ENCODE measurements at regions of chr17 and their contacts with region 1.

Region 1: GRCh38 chr17:32909787-32910369 is 18.1 kb upstream of the TMEM98 start:
- DNase-seq: peak; percentile 88
- H3K4me3 ChIP-seq: no peak overlapping the region
- H3K27ac ChIP-seq: no peak overlapping the region
- H3K4me1 ChIP-seq: peaks cover 9% of the 10 kb centered on the region
- H3K27me3 ChIP-seq: peaks cover 0 to under 1% of the 10 kb centered on the region in 2 experiments
- CTCF ChIP-seq: peak; percentile 72 to 81
- POLR2A ChIP-seq: no peak

Region 2: DNA sequence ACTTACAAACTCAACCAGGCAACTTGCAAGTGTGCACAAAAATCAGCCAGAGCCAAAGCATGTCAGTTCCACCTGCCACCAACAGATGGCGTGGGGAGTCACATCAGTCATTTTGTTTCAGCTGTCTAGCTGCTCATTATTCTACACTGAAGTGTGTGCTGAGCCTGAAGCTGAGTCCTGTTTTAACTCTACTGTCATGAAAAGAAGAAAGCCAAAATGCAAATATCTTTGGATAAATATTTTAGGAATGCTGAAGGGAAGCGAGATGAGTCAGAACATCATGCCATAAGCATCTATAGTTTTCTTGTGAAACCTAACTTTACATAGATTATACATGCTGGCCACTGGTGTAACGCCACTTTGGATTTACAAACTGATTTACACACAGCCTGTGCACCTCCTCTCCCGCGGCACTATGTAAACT is 250.4 kb before region 1 on chr17:
- CTCF ChIA-PET with region 1: interaction called, 13 read pairs
- POLR2A ChIA-PET with region 1: no interaction called
- dilution Hi-C with region 1: no loop called
- intact Hi-C with region 1: loop called (anchors 1 kb)
- DNase-seq: peak; percentile 84
- H3K4me3 ChIP-seq: no peak overlapping the region
- H3K27ac ChIP-seq: no peak overlapping the region
- H3K4me1 ChIP-seq: no peaks in the 10 kb centered on the region
- H3K27me3 ChIP-seq: no peaks in the 10 kb centered on the region
- CTCF ChIP-seq: peak; percentile 85 to 92
- POLR2A ChIP-seq: no peak

Region 3: GRCh38 chr17:32746698-32747097 is 163.2 kb before region 1 on chr17:
- CTCF ChIA-PET with region 1: no interaction called
- POLR2A ChIA-PET with region 1: no interaction called
- dilution Hi-C with region 1: no loop called
- intact Hi-C with region 1: no loop called
- DNase-seq: no peak
- H3K4me3 ChIP-seq: no peak overlapping the region
- H3K27ac ChIP-seq: peak overlapping the region; percentile 12
- H3K4me1 ChIP-seq: peaks cover 30% of the 10 kb centered on the region
- H3K27me3 ChIP-seq: no peaks in the 10 kb centered on the region
- CTCF ChIP-seq: no peak
- POLR2A ChIP-seq: no peak

Region 4: DNA sequence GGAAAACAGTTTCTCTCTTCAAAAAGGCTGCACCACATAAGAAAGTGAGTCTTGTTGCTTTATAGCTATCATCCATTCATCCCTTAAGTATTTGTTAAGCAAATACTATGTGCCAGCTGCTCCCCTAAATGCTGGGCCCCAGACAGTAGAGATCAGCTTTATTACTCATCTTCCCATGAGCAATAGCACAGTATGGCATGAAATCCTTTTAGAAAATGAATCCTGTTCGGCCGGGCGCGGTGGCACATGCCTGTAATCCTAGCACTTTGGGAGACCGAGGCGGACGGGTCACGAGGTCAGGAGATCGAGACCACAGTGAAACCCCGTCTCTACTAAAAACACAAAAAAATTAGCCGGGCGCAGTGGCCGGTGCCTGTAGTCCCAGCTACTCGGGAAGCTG is 132.4 kb before region 1 on chr17:
- CTCF ChIA-PET with region 1: interaction called, 119 read pairs
- POLR2A ChIA-PET with region 1: no interaction called
- dilution Hi-C with region 1: no loop called
- intact Hi-C with region 1: no loop called
- DNase-seq: no peak
- H3K4me3 ChIP-seq: no peak overlapping the region
- H3K27ac ChIP-seq: no peak overlapping the region
- H3K4me1 ChIP-seq: peaks cover 5% of the 10 kb centered on the region
- H3K27me3 ChIP-seq: no peaks in the 10 kb centered on the region
- CTCF ChIP-seq: no peak
- POLR2A ChIP-seq: no peak

Region 5: GRCh38 chr17:32794533-32795246 is 115.2 kb before region 1 on chr17:
- CTCF ChIA-PET with region 1: interaction called, 11 read pairs
- POLR2A ChIA-PET with region 1: no interaction called
- dilution Hi-C with region 1: no loop called
- intact Hi-C with region 1: no loop called
- DNase-seq: peak; percentile 39
- H3K4me3 ChIP-seq: no peak overlapping the region
- H3K27ac ChIP-seq: peak overlapping the region; percentile 92
- H3K4me1 ChIP-seq: peaks cover 57% of the 10 kb centered on the region
- H3K27me3 ChIP-seq: no peaks in the 10 kb centered on the region
- CTCF ChIP-seq: no peak
- POLR2A ChIP-seq: no peak

Region 6: GRCh38 chr17:32894245-32894644 is 15.6 kb before region 1 on chr17:
- CTCF ChIA-PET with region 1: interaction called, 12 read pairs
- POLR2A ChIA-PET with region 1: interaction called, 3 read pairs
- dilution Hi-C with region 1: no loop called
- intact Hi-C with region 1: no loop called
- DNase-seq: no peak
- H3K4me3 ChIP-seq: no peak overlapping the region
- H3K27ac ChIP-seq: no peak overlapping the region
- H3K4me1 ChIP-seq: no peaks in the 10 kb centered on the region
- H3K27me3 ChIP-seq: peaks cover 0 to 3% of the 10 kb centered on the region in 2 experiments
- CTCF ChIP-seq: no peak
- POLR2A ChIP-seq: no peak

Region 7: GRCh38 chr17:32936894-32937500 is 27.1 kb after region 1 on chr17:
- CTCF ChIA-PET with region 1: interaction called, 20 read pairs
- POLR2A ChIA-PET with region 1: no interaction called
- dilution Hi-C with region 1: no loop called
- intact Hi-C with region 1: loop called (anchors 1 kb)
- DNase-seq: peak; percentile 90
- H3K4me3 ChIP-seq: no peak overlapping the region
- H3K27ac ChIP-seq: peak overlapping the region; percentile 61
- H3K4me1 ChIP-seq: peaks cover 10% of the 10 kb centered on the region
- H3K27me3 ChIP-seq: no peaks in the 10 kb centered on the region
- CTCF ChIP-seq: peak; percentile 88 to 89
- POLR2A ChIP-seq: no peak